A673 (cell line): ENCODE measurements at regions of chr18 and their contacts with region 1.

Region 1: GRCh38 chr18:4264347-4264791 is 190.7 kb downstream of the DLGAP1 start:
- DNase-seq: peak; percentile 83
- H3K4me3 ChIP-seq: peak overlapping the region; percentile 27
- H3K27ac ChIP-seq: peak overlapping the region; percentile 79
- H3K4me1 ChIP-seq: peaks cover 62% of the 10 kb centered on the region
- H3K27me3 ChIP-seq: no peaks in the 10 kb centered on the region
- CTCF ChIP-seq: no peak

Region 2: GRCh38 chr18:4106407-4107033 is 157.8 kb before region 1 on chr18:
- CTCF ChIA-PET with region 1: interaction called, 16 read pairs
- POLR2A ChIA-PET with region 1: no interaction called
- intact Hi-C with region 1: loop called (anchors 5 kb)
- DNase-seq: peak; percentile 87
- H3K4me3 ChIP-seq: no peak overlapping the region
- H3K27ac ChIP-seq: no peak overlapping the region
- H3K4me1 ChIP-seq: peaks cover 10% of the 10 kb centered on the region
- H3K27me3 ChIP-seq: no peaks in the 10 kb centered on the region
- CTCF ChIP-seq: peak; percentile 92

Region 3: DNA sequence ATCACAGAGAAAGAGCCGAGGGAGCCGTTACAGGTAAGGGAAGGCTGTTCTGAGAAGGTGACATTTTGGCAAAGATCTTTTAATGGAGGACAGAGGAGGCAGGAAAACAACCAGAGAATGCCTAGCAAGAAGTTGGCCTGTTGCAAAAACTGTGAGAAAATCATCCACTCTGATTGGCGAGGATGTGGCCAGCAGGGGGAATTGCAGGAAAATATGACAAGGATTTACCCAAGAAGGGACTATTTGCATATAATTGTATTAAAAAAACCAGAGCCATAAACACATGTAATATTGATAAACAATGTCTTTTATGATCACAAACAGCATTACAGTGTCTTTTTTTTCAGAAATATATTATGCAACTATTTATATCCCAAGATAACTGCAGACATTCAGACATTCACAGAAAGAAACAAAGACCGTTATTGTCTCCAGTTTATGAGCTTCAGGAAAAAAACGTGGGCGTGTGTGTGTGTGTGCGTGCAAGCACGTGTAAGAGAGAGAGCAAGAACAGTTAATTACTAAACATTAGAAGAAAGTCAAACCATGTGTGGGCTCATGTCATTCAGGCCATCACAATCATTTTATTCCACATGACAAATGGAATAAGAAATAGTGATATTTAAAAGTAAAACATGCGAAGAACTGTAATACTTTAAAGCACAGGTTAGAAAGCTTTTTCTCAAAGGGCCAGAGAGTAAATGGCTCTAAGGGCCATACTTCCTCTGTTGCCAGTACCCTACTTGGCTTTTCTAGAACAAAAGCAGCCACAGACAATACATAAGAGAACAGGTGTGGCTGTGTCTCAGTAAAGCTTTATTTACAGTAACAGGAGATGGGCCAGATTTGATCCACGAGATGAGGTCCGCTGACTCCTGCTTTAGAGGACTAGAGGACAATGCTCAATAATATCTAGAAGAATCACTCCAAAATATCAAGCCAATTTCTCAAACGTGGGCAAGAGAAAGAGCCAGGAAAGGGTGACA is 133.3 kb before region 1 on chr18:
- CTCF ChIA-PET with region 1: no interaction called
- POLR2A ChIA-PET with region 1: no interaction called
- intact Hi-C with region 1: loop called (anchors 5 kb)
- DNase-seq: peak; percentile 60
- H3K4me3 ChIP-seq: no peak overlapping the region
- H3K27ac ChIP-seq: no peak overlapping the region
- H3K4me1 ChIP-seq: peaks cover 65% of the 10 kb centered on the region
- H3K27me3 ChIP-seq: no peaks in the 10 kb centered on the region
- CTCF ChIP-seq: peak; percentile 58

Region 4: GRCh38 chr18:4193086-4193485 is 71.3 kb before region 1 on chr18:
- CTCF ChIA-PET with region 1: no interaction called
- POLR2A ChIA-PET with region 1: no interaction called
- intact Hi-C with region 1: no loop called
- DNase-seq: no peak
- H3K4me3 ChIP-seq: no peak overlapping the region
- H3K27ac ChIP-seq: no peak overlapping the region
- H3K4me1 ChIP-seq: peaks cover 9% of the 10 kb centered on the region
- H3K27me3 ChIP-seq: no peaks in the 10 kb centered on the region
- CTCF ChIP-seq: no peak